ENCODE measurements at regions of chr6 and their contacts with region 1.

Region 1: GRCh38 chr6:98845211-98846020 is 11.0 kb downstream of the POU3F2 start:
- DNase-seq: peak; percentile 60
- ATAC-seq: peak; percentile 77
- H3K4me3 Mint-ChIP-seq: peak overlapping the region; percentile 74
- H3K27ac Mint-ChIP-seq: no peak overlapping the region
- H3K4me1 Mint-ChIP-seq: peaks cover 30% of the 10 kb centered on the region
- H3K27me3 Mint-ChIP-seq: peaks cover 78% of the 10 kb centered on the region
- CTCF ChIP-seq: peak; percentile 48

Region 2: GRCh38 chr6:97186416-97186999 is 1658.9 kb before region 1 on chr6:
- CTCF ChIA-PET with region 1: no interaction called
- POLR2A ChIA-PET with region 1: no interaction called
- intact Hi-C with region 1: loop called (anchors 1 kb)
- DNase-seq: peak; percentile 15
- ATAC-seq: peak; percentile 71
- H3K4me3 Mint-ChIP-seq: no peak overlapping the region
- H3K27ac Mint-ChIP-seq: no peak overlapping the region
- H3K4me1 Mint-ChIP-seq: no peaks in the 10 kb centered on the region
- H3K27me3 Mint-ChIP-seq: no peaks in the 10 kb centered on the region
- CTCF ChIP-seq: peak; percentile 99

Region 3: GRCh38 chr6:98054453-98054852 is 791.0 kb before region 1 on chr6:
- CTCF ChIA-PET with region 1: no interaction called
- POLR2A ChIA-PET with region 1: no interaction called
- intact Hi-C with region 1: loop called (anchors 5 kb)
- DNase-seq: no peak
- ATAC-seq: no peak
- H3K4me3 Mint-ChIP-seq: no peak overlapping the region
- H3K27ac Mint-ChIP-seq: no peak overlapping the region
- H3K4me1 Mint-ChIP-seq: no peaks in the 10 kb centered on the region
- H3K27me3 Mint-ChIP-seq: no peaks in the 10 kb centered on the region
- CTCF ChIP-seq: no peak

Region 4: GRCh38 chr6:98797217-98797994 is 48.0 kb before region 1 on chr6:
- CTCF ChIA-PET with region 1: no interaction called
- POLR2A ChIA-PET with region 1: no interaction called
- intact Hi-C with region 1: no loop called
- DNase-seq: no peak
- ATAC-seq: no peak
- H3K4me3 Mint-ChIP-seq: no peak overlapping the region
- H3K27ac Mint-ChIP-seq: no peak overlapping the region
- H3K4me1 Mint-ChIP-seq: no peaks in the 10 kb centered on the region
- H3K27me3 Mint-ChIP-seq: peaks cover 12% of the 10 kb centered on the region
- CTCF ChIP-seq: no peak

Region 5: DNA sequence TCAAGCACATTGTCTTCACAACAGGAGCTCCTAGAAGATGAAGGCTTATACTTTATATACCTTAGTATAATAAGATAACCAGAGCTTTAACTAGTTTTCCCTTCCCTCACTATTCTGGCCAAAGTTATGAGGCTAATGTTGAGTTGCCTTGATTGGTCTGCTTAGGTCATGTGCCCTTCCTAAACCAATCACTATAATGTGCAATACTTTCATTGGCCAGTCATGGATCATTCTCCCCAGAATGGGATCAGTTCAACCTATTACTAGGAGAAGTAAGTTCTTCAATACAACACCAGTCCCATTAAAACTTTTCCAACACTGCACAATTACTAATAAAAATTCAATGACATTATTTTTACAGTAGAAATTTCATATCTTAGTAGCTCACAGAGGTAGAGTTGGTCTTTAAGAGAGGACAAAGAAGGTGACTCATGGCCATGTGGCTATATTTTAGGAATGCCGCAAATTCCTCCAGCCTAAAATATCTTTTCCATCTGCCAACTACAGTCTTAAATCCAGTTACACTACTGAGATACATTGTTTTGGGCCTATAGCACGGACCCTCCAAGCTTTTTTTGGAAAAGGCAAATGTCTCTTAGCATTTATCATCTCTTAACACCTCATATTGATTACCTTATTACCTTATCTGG is 23.5 kb before region 1 on chr6:
- CTCF ChIA-PET with region 1: no interaction called
- POLR2A ChIA-PET with region 1: no interaction called
- intact Hi-C with region 1: no loop called
- DNase-seq: no peak
- ATAC-seq: no peak
- H3K4me3 Mint-ChIP-seq: no peak overlapping the region
- H3K27ac Mint-ChIP-seq: no peak overlapping the region
- H3K4me1 Mint-ChIP-seq: peaks cover 6% of the 10 kb centered on the region
- H3K27me3 Mint-ChIP-seq: peaks cover 52% of the 10 kb centered on the region
- CTCF ChIP-seq: no peak

Region 6: DNA sequence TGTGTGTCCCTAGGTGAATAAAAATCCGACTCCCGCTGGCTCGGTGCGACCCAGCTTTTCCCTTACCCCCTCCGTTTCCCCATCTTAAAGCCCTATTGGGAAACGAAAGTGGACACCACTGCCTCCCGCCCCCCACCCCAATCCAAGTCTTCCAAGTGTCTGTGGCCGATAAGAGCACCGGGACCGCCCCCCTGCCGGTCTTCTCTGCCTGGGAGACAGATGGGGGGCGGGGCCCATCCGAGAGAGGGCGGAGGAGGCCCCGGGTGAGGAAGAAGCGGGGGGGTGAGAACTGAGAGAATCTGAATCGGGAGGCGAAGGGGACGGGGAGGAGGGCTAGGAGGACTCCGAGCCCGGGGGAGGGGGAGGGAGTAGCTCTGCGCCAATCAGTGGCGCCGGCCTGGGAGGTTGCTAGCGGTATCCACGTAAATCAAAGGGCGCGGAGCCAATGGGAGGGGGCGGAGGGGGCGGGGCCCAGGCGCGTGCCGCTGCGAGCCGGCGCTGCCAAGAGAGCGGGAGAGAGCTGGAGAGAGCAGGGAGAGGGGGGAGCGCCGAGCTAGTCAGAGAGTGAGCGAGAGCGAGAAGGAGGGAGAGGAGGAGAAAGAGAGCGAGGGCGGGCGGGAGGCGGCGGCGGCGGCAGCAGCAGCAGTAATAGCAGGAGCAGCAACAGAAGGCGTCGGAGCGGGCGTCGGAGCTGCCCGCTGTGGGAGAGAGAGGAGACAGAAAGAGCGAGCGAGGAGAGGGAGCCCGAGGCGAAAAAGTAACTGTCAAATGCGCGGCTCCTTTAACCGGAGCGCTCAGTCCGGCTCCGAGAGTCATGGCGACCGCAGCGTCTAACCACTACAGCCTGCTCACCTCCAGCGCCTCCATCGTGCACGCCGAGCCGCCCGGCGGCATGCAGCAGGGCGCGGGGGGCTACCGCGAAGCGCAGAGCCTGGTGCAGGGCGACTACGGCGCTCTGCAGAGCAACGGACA is 11.1 kb before region 1 on chr6 and contains the start of gene POU3F2:
- CTCF ChIA-PET with region 1: interaction called, 4 read pairs
- POLR2A ChIA-PET with region 1: no interaction called
- intact Hi-C with region 1: loop called (anchors 1 kb)
- DNase-seq: peak; percentile 48
- ATAC-seq: peak; percentile 88
- H3K4me3 Mint-ChIP-seq: peak within 1 kb of the TSS; percentile 89
- H3K27ac Mint-ChIP-seq: no peak within 1 kb of the TSS
- H3K4me1 Mint-ChIP-seq: peaks cover 47% of the 10 kb centered on the region
- H3K27me3 Mint-ChIP-seq: peaks cover 60% of the 10 kb centered on the region
- CTCF ChIP-seq: no peak
- total RNA-seq, gene POU3F2: not detected in 2 replicates

Region 7: GRCh38 chr6:99384507-99384906 is 539.1 kb after region 1 on chr6:
- CTCF ChIA-PET with region 1: no interaction called
- POLR2A ChIA-PET with region 1: no interaction called
- intact Hi-C with region 1: no loop called
- DNase-seq: no peak
- ATAC-seq: no peak
- H3K4me3 Mint-ChIP-seq: no peak overlapping the region
- H3K27ac Mint-ChIP-seq: no peak overlapping the region
- H3K4me1 Mint-ChIP-seq: no peaks in the 10 kb centered on the region
- H3K27me3 Mint-ChIP-seq: no peaks in the 10 kb centered on the region
- CTCF ChIP-seq: no peak

Region 8: GRCh38 chr6:100455230-100456124 is 1610.1 kb after region 1 on chr6:
- CTCF ChIA-PET with region 1: no interaction called
- POLR2A ChIA-PET with region 1: no interaction called
- intact Hi-C with region 1: loop called (anchors 5 kb)
- DNase-seq: no peak
- ATAC-seq: no peak
- H3K4me3 Mint-ChIP-seq: no peak overlapping the region
- H3K27ac Mint-ChIP-seq: no peak overlapping the region
- H3K4me1 Mint-ChIP-seq: peaks cover 4% of the 10 kb centered on the region
- H3K27me3 Mint-ChIP-seq: peaks cover 57% of the 10 kb centered on the region
- CTCF ChIP-seq: no peak